B cell (primary cell): ENCODE measurements at regions of chr2 and their contacts with region 1.

Region 1: GRCh38 chr2:134918526-134919340 is at the start of gene CCNT2:
- DNase-seq: peak; percentile 100
- ATAC-seq: peak; percentile 82
- H3K4me3 ChIP-seq: peak within 1 kb of the TSS; percentile 78 to 98 (median 93)
- H3K4me3 Mint-ChIP-seq: peak within 1 kb of the TSS; percentile 85
- H3K27ac ChIP-seq: peak within 1 kb of the TSS; percentile 94 to 96
- H3K27ac Mint-ChIP-seq: peak within 1 kb of the TSS; percentile 94
- H3K4me1 ChIP-seq: peaks cover 31 to 32% of the 10 kb centered on the region in 2 donors
- H3K4me1 Mint-ChIP-seq: peaks cover 48% of the 10 kb centered on the region
- H3K27me3 ChIP-seq: no peaks in the 10 kb centered on the region
- H3K27me3 Mint-ChIP-seq: no peaks in the 10 kb centered on the region
- CTCF ChIP-seq: no peak
- total RNA-seq, gene CCNT2: 86.7 and 91.0 TPM in 2 replicates

Region 2: DNA sequence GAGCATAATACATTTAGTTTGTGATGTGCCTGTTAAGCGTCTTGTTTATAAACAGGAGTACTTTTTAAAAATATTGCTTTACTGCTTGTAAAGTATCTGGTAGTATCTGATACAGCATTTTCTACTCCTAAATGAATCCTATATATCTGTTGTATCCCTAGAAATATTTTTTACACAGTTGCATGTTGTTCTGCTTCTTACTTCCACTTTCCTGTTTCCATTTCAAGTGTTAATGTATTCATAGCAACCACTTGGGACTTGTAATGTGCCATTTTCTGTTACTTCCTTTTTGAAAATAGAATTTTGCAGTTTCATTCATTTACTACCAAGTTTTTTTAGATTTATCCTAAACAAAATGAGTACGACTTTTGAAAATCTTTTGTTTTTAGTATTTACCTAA is 24.8 kb after region 1 on chr2:
- CTCF ChIA-PET with region 1: interaction called, 3 read pairs
- POLR2A ChIA-PET with region 1: no interaction called
- intact Hi-C with region 1: loop called (anchors 1 kb)
- DNase-seq: peak; percentile 47
- ATAC-seq: peak; percentile 45
- H3K4me3 ChIP-seq: peak overlapping the region in 1 of 5 experiments; percentile 19
- H3K4me3 Mint-ChIP-seq: peak overlapping the region; percentile 59
- H3K27ac ChIP-seq: peak overlapping the region; percentile 42 to 58
- H3K27ac Mint-ChIP-seq: peak overlapping the region; percentile 44
- H3K4me1 ChIP-seq: peaks cover 9 to 21% of the 10 kb centered on the region in 2 donors
- H3K4me1 Mint-ChIP-seq: peaks cover 30% of the 10 kb centered on the region
- H3K27me3 ChIP-seq: no peaks in the 10 kb centered on the region
- H3K27me3 Mint-ChIP-seq: no peaks in the 10 kb centered on the region
- CTCF ChIP-seq: no peak

Region 3: DNA sequence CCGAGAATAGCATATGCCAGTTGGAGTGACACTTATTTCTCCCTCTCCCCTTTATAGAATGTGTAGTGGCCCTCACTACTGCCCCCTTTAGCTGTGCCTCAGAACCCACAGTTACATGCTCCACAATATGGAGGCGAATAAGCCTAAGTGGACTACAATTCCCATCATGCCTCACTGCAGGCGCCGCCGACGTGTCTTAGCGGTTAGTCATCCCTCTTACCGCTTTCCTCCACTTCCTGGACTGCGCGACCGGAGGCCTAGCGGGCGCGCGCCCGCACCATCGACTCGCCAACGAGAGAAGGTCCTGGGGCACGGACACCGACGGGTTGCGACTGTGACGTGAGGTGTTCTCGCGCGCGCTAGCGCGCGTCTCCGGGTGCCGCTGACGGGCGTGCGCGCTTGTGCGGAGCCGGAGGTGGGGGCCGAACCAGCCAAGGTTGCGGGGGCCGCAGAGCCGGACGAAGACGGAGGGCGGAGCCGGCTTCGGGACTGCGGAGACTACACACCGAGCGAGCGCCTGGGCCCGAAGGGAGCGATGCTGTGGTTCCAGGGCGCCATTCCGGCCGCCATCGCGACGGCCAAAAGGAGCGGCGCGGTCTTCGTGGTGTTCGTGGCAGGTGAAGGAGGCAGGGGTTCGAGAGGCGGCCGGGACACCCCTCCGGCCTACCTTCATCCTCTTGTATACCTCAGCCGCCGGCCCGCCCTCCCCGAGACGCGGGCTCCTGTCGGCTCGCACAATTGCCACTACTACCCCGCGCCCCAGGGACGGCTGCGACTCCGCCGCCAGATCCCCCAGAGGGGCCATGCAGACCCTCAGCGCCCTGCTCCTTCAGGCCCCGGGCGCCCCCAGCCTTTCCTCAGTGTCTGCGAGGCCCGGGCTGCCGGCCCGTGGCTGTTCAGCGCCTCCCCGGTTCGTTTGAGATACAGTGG is 822.9 kb after region 1 on chr2 and contains the start of gene UBXN4:
- CTCF ChIA-PET with region 1: no interaction called
- POLR2A ChIA-PET with region 1: no interaction called
- intact Hi-C with region 1: loop called (anchors 1 kb)
- DNase-seq: peak; percentile 98
- ATAC-seq: peak; percentile 87
- H3K4me3 ChIP-seq: peak within 1 kb of the TSS; percentile 76 to 94 (median 91)
- H3K4me3 Mint-ChIP-seq: peak within 1 kb of the TSS; percentile 93
- H3K27ac ChIP-seq: peak within 1 kb of the TSS; percentile 94 to 95
- H3K27ac Mint-ChIP-seq: peak within 1 kb of the TSS; percentile 96
- H3K4me1 ChIP-seq: peaks cover 9 to 17% of the 10 kb centered on the region in 2 donors
- H3K4me1 Mint-ChIP-seq: peaks cover 38% of the 10 kb centered on the region
- H3K27me3 ChIP-seq: no peaks in the 10 kb centered on the region
- H3K27me3 Mint-ChIP-seq: no peaks in the 10 kb centered on the region
- CTCF ChIP-seq: peak; percentile 35
- total RNA-seq, gene UBXN4: 112 and 113 TPM in 2 replicates